B cell (primary cell): ENCODE measurements at regions of chr17 and their contacts with region 1.

Region 1: GRCh38 chr17:16589097-16589969 is 20.3 kb upstream of the ZNF287 start:
- DNase-seq: peak; percentile 92
- ATAC-seq: peak; percentile 98
- H3K4me3 ChIP-seq: peak overlapping the region; percentile 38 to 66 (median 56)
- H3K4me3 Mint-ChIP-seq: peak overlapping the region; percentile 82
- H3K27ac ChIP-seq: no peak overlapping the region
- H3K27ac Mint-ChIP-seq: no peak overlapping the region
- H3K4me1 ChIP-seq: peaks cover 12 to 15% of the 10 kb centered on the region in 2 donors
- H3K4me1 Mint-ChIP-seq: peaks cover 8% of the 10 kb centered on the region
- H3K27me3 ChIP-seq: peaks cover 0 to 30% (median 14%) of the 10 kb centered on the region in 4 experiments
- H3K27me3 Mint-ChIP-seq: peaks cover 51% of the 10 kb centered on the region
- CTCF ChIP-seq: peak; percentile 97

Region 2: DNA sequence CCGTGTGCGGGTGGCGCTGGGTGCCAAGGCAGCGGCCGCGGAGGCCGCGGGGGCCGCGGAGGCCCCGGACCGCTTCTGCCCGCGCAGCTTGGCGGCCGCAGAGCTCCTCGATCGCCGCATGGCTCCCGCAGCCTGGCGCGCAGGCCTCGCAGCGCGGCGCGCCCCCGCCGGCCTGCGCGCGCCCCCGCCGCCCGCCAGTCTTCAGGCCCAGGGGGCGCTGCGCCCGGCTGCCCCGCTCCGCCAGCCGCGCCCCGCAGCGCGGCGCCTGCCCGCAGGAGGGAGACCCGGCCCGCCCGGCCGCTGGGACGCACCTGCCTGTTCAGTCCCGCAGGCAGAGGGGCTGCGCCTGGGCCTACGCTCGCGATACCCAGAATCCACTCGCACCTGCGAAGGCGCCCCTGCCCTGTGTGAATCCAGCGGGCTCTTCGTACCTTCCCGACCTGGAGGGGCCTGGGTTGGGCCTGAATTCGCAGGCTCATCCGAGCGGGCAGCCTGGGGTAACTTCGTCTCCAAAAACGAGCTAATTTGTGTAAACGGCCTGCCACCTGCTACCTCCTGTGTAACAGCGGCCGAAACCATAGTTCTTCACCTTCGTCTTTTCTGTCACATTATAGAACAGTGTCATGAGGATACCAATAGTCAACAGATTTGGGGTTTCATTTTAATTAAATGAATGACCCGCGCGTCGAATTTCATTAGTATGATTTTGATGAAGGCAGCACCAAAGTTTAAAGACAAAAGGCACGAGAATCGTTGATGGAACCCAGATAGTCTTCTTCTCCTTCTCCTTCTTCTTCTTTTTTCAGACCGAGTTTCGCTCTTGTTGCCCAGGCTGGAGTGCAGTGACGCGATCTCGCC is 235.8 kb before region 1 on chr17 and contains the start of gene CENPV:
- CTCF ChIA-PET with region 1: no interaction called
- POLR2A ChIA-PET with region 1: no interaction called
- intact Hi-C with region 1: no loop called
- DNase-seq: peak; percentile 86
- ATAC-seq: peak; percentile 87
- H3K4me3 ChIP-seq: peak within 1 kb of the TSS; percentile 51 to 78 (median 70)
- H3K4me3 Mint-ChIP-seq: peak within 1 kb of the TSS; percentile 94
- H3K27ac ChIP-seq: peak within 1 kb of the TSS in 1 of 2 donors; percentile 56
- H3K27ac Mint-ChIP-seq: peak within 1 kb of the TSS; percentile 80
- H3K4me1 ChIP-seq: peaks cover 8 to 16% of the 10 kb centered on the region in 2 donors
- H3K4me1 Mint-ChIP-seq: peaks cover 15% of the 10 kb centered on the region
- H3K27me3 ChIP-seq: no peaks in the 10 kb centered on the region
- H3K27me3 Mint-ChIP-seq: no peaks in the 10 kb centered on the region
- CTCF ChIP-seq: no peak
- total RNA-seq, gene CENPV: 15.8 and 17.7 TPM in 2 replicates

Region 3: DNA sequence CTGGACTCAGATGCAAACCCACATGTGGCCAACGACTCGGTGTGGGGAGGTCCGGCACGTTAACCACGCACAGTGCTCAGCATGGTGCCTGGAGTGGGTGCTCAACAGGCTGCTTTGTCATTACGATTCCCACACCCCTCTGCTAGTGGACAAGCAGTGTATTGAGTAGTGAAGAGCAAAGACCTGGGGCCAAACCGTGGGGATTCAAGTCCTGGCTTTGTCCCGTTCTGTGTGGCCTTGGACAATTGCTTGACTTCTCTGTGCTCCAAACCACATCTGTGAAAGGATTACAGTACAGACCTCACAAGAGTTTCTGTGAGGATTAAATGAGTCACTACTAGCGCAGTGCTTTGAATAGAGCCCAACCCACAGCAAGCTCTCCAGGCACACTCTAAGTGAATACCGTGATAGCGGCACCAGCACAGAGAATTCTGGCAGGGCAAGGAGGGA is 140.2 kb before region 1 on chr17:
- CTCF ChIA-PET with region 1: interaction called, 4 read pairs
- POLR2A ChIA-PET with region 1: no interaction called
- intact Hi-C with region 1: loop called (anchors 5 kb)
- DNase-seq: no peak
- ATAC-seq: no peak
- H3K4me3 ChIP-seq: no peak overlapping the region
- H3K4me3 Mint-ChIP-seq: no peak overlapping the region
- H3K27ac ChIP-seq: no peak overlapping the region
- H3K27ac Mint-ChIP-seq: no peak overlapping the region
- H3K4me1 ChIP-seq: no peaks in the 10 kb centered on the region
- H3K4me1 Mint-ChIP-seq: peaks cover 3% of the 10 kb centered on the region
- H3K27me3 ChIP-seq: no peaks in the 10 kb centered on the region
- H3K27me3 Mint-ChIP-seq: no peaks in the 10 kb centered on the region
- CTCF ChIP-seq: no peak

Region 4: GRCh38 chr17:16568541-16569357 is 20.6 kb before region 1 on chr17 and contains the start of gene ZNF287:
- CTCF ChIA-PET with region 1: interaction called, 9 read pairs
- POLR2A ChIA-PET with region 1: interaction called, 4 read pairs
- intact Hi-C with region 1: loop called (anchors 1 kb)
- DNase-seq: peak; percentile 97
- ATAC-seq: peak; percentile 97
- H3K4me3 ChIP-seq: peak within 1 kb of the TSS; percentile 7 to 77 (median 69)
- H3K4me3 Mint-ChIP-seq: peak within 1 kb of the TSS; percentile 83
- H3K27ac ChIP-seq: peak within 1 kb of the TSS; percentile 39 to 83
- H3K27ac Mint-ChIP-seq: peak within 1 kb of the TSS; percentile 92
- H3K4me1 ChIP-seq: peaks cover 16 to 18% of the 10 kb centered on the region in 2 donors
- H3K4me1 Mint-ChIP-seq: peaks cover 15% of the 10 kb centered on the region
- H3K27me3 ChIP-seq: no peaks in the 10 kb centered on the region
- H3K27me3 Mint-ChIP-seq: no peaks in the 10 kb centered on the region
- CTCF ChIP-seq: no peak
- total RNA-seq, gene ZNF287: 16.6 and 19.3 TPM in 2 replicates

Region 5: GRCh38 chr17:16599537-16599936 is 10.2 kb after region 1 on chr17:
- CTCF ChIA-PET with region 1: no interaction called
- POLR2A ChIA-PET with region 1: no interaction called
- intact Hi-C with region 1: no loop called
- DNase-seq: no peak
- ATAC-seq: no peak
- H3K4me3 ChIP-seq: no peak overlapping the region
- H3K4me3 Mint-ChIP-seq: no peak overlapping the region
- H3K27ac ChIP-seq: no peak overlapping the region
- H3K27ac Mint-ChIP-seq: no peak overlapping the region
- H3K4me1 ChIP-seq: no peaks in the 10 kb centered on the region
- H3K4me1 Mint-ChIP-seq: no peaks in the 10 kb centered on the region
- H3K27me3 ChIP-seq: peaks cover 0 to 4% (median 0%) of the 10 kb centered on the region in 4 experiments
- H3K27me3 Mint-ChIP-seq: peaks cover 13% of the 10 kb centered on the region
- CTCF ChIP-seq: no peak

Region 6: GRCh38 chr17:16653209-16654041 is 64.1 kb after region 1 on chr17 and contains the start of gene ZNF624:
- CTCF ChIA-PET with region 1: interaction called, 3 read pairs
- POLR2A ChIA-PET with region 1: no interaction called
- intact Hi-C with region 1: loop called (anchors 5 kb)
- DNase-seq: peak; percentile 91
- ATAC-seq: peak; percentile 95
- H3K4me3 ChIP-seq: peak within 1 kb of the TSS; percentile 54 to 96 (median 86)
- H3K4me3 Mint-ChIP-seq: peak within 1 kb of the TSS; percentile 94
- H3K27ac ChIP-seq: peak within 1 kb of the TSS; percentile 39 to 78
- H3K27ac Mint-ChIP-seq: peak within 1 kb of the TSS; percentile 87
- H3K4me1 ChIP-seq: peaks cover 6 to 11% of the 10 kb centered on the region in 2 donors
- H3K4me1 Mint-ChIP-seq: peaks cover 16% of the 10 kb centered on the region
- H3K27me3 ChIP-seq: peaks cover 0 to 5% (median 1%) of the 10 kb centered on the region in 4 experiments
- H3K27me3 Mint-ChIP-seq: peaks cover 7% of the 10 kb centered on the region
- CTCF ChIP-seq: no peak
- total RNA-seq, gene ZNF624: 12.0 and 13.5 TPM in 2 replicates